ENCODE measurements at regions of chr1 and their contacts with region 1.

Region 1: DNA sequence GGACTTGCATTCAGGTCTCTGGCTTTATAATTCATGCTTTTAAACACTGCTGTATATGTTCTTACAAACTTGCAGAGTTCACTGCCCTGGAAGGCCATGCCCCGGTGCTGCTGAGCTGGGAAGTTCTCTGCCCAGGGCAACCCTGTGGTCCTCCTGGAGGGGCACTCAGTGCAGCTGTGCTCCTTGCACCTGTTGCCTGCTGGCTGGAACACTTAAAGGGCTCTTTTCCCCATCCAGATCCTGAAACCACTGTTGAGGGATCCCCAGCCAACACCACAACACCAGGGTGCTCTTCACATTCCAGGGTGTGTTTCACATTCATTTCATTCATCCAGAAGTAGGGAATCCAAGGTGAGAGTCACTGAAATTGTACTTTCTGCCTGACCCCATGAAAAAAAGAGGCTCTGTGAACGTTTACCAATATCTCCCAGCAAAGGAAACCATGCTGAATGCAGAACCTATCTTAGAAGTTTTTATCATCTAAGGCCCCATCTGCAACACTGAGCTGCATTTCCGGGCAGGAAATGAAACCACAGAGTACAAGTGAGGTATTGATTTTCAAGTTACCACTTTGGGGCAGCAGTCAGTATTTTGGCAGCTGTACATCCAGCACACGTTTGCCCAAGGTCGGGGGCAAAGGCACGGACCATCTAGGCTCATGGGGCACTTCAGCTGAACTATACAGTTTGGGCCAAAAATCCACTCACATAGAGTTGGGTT is 16.4 kb upstream of the KIAA0040 start:
- DNase-seq: peak; percentile 75 to 94 (median 89)
- H3K4me3 ChIP-seq: peak overlapping the region in 5 of 7 experiments; percentile 30 to 46 (median 35)
- H3K27ac ChIP-seq: peak overlapping the region; percentile 3 to 59
- H3K4me1 ChIP-seq: peaks cover 25 to 44% (median 33%) of the 10 kb centered on the region in 4 experiments
- H3K27me3 ChIP-seq: no peaks in the 10 kb centered on the region

Region 2: DNA sequence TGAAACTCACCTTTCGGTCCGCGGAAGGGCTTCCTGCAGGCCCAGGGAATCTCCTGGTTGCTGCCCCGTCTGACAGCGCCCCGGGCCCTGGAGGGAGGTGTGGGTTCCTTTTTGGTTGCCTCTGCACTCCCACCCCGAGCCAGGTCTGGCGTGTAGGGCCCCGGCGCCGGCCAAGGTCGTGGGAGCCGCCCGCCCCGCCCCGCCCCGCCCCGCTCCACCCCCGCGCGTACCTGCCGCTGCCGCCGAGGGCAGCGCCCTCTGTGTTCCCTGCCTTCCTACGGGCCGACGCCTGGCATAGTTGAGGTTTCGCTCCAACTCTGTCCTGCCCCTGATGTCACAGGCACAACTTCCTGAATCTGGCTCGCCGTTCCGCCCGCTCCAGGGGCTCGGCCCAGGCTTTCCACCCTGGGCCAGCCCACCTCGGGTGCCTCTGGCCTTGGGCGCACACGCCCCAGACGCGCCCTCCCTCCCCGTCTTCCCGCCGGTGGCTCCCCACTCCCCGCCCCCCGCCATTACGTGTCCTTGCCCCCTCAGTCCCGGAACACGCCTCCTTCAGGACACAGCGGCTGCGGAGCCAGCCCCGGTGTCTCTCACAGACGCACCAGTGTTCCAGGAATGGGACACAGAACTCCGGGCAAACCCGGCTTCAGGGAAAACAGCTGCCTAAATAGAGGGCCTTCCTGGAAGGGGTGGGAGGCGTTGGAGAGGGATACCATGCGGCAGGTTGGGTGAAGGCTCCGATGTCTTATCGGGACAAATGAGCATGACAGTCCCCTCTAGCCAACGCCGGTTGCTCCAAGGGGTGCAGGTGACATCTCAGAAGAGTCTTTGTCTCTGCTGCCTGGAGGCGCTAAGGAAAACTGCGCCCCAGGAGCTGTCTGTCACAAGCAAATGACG is 16.1 kb before region 1 on chr1 and contains the start of gene KIAA0040:
- CTCF ChIA-PET with region 1: interaction called, 23 read pairs
- POLR2A ChIA-PET with region 1: interaction called, 3 read pairs
- DNase-seq: peak; percentile 82 to 88 (median 84)
- H3K4me3 ChIP-seq: peak within 1 kb of the TSS; percentile 45 to 94 (median 85)
- H3K27ac ChIP-seq: peak within 1 kb of the TSS; percentile 26 to 72
- H3K4me1 ChIP-seq: peaks cover 25 to 56% (median 48%) of the 10 kb centered on the region in 4 experiments
- H3K27me3 ChIP-seq: no peaks in the 10 kb centered on the region